ENCODE measurements at regions of chr22 and their contacts with region 1.

Region 1: GRCh38 chr22:20885557-20886323 is 26.9 kb downstream of the SNAP29 start:
- DNase-seq: peak; percentile 90
- H3K4me3 Mint-ChIP-seq: peak overlapping the region; percentile 32
- H3K27ac Mint-ChIP-seq: peak overlapping the region; percentile 58
- H3K4me1 Mint-ChIP-seq: peaks cover 28% of the 10 kb centered on the region
- H3K27me3 Mint-ChIP-seq: no peaks in the 10 kb centered on the region
- CTCF ChIP-seq: peak; percentile 98

Region 2: GRCh38 chr22:20803696-20804324 is 81.9 kb before region 1 on chr22:
- CTCF ChIA-PET with region 1: interaction called, 14 read pairs
- intact Hi-C with region 1: no loop called
- DNase-seq: peak; percentile 57
- H3K4me3 Mint-ChIP-seq: no peak overlapping the region
- H3K27ac Mint-ChIP-seq: no peak overlapping the region
- H3K4me1 Mint-ChIP-seq: peaks cover 13% of the 10 kb centered on the region
- H3K27me3 Mint-ChIP-seq: no peaks in the 10 kb centered on the region
- CTCF ChIP-seq: peak; percentile 60

Region 3: DNA sequence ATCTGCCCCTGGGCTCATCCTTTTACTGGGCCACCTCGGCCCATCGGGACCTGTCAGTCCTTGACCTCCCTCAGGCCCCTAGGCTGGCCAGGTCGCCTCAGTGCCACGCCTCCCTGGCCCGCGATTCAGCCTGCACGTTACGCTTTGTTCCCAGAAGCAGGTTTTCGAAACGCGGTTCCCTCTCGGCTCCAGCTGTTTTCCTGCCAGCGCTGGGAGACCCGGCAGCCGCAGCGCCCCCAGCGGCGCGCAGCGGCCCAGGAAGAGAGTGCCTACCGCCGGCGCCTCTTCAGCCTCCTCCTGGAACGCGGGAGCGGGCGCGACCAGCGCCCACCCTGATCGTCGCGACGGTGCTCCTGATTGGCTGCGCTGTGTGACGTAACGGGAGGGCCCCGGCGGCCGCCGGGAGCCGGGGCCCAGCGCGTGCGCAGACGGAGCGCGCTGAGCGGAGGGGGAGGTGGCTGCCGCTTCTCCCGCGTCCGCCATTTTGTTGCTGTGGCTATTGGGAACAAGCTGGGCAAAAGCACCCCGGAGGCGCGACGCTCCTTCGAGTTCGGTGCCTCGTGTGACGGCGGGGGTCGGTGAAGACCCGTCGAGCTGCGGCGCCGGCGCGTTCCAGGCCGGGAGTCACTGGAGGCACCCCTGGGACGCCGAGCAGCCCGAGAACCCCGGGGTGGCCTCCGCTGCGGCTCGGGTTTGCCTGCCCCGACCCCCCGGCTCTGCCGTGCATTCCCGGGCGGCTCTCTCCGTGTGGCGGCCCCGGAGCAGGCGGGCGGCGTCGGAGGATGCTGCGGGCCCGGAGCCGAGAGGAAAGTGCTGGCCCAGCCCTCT is 31.5 kb after region 1 on chr22 and contains the start of gene CRKL:
- CTCF ChIA-PET with region 1: interaction called, 16 read pairs
- intact Hi-C with region 1: no loop called
- DNase-seq: peak; percentile 97
- H3K4me3 Mint-ChIP-seq: peak within 1 kb of the TSS; percentile 76
- H3K27ac Mint-ChIP-seq: peak within 1 kb of the TSS; percentile 81
- H3K4me1 Mint-ChIP-seq: peaks cover 21% of the 10 kb centered on the region
- H3K27me3 Mint-ChIP-seq: no peaks in the 10 kb centered on the region
- CTCF ChIP-seq: peak; percentile 90
- total RNA-seq, gene CRKL: 68.0 and 69.9 TPM in 2 replicates

Region 4: DNA sequence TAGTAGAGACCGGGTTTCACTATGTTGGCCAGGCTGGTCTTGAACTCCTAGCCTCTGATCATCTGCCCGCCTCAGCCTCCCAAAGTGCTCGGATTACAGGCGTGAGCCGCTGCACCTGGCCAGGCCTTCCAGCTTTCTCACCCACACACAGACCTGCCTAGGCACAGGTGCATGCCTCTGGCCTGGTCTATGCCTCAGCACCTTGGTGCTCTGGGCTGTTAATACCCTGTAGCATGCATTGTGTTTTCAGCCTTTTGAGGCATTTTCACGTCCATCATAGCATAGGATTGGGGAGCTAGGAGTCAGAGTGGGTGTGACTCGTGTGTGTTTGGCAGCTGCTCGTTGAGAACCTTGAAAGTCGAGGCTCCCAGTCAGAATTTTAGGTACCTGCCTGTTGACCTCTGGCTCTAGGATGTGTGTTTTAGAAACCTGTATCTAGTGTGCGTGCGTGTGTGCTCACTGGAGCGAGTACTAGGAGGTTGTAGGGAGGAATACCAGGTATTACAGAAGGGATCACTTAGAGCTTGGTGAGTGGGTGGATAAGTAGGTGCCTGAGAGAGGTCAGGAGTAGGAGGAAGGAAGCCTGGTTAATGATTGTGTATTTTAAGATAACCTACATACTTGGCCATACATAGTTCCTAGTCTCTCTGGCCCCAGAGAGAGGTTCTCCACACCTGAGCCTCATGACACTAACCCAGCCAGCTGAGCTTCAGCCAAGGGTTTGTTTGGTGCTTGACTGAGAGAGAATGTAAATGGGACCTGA is 51.5 kb after region 1 on chr22:
- CTCF ChIA-PET with region 1: interaction called, 18 read pairs
- intact Hi-C with region 1: no loop called
- DNase-seq: no peak
- H3K4me3 Mint-ChIP-seq: peak overlapping the region; percentile 70
- H3K27ac Mint-ChIP-seq: peak overlapping the region; percentile 67
- H3K4me1 Mint-ChIP-seq: peaks cover 53% of the 10 kb centered on the region
- H3K27me3 Mint-ChIP-seq: no peaks in the 10 kb centered on the region
- CTCF ChIP-seq: no peak

Region 5: GRCh38 chr22:20957316-20958101 is 71.8 kb after region 1 on chr22:
- CTCF ChIA-PET with region 1: interaction called, 26 read pairs
- intact Hi-C with region 1: no loop called
- DNase-seq: peak; percentile 52
- H3K4me3 Mint-ChIP-seq: peak overlapping the region; percentile 91
- H3K27ac Mint-ChIP-seq: peak overlapping the region; percentile 82
- H3K4me1 Mint-ChIP-seq: peaks cover 28% of the 10 kb centered on the region
- H3K27me3 Mint-ChIP-seq: no peaks in the 10 kb centered on the region
- CTCF ChIP-seq: no peak

Region 6: DNA sequence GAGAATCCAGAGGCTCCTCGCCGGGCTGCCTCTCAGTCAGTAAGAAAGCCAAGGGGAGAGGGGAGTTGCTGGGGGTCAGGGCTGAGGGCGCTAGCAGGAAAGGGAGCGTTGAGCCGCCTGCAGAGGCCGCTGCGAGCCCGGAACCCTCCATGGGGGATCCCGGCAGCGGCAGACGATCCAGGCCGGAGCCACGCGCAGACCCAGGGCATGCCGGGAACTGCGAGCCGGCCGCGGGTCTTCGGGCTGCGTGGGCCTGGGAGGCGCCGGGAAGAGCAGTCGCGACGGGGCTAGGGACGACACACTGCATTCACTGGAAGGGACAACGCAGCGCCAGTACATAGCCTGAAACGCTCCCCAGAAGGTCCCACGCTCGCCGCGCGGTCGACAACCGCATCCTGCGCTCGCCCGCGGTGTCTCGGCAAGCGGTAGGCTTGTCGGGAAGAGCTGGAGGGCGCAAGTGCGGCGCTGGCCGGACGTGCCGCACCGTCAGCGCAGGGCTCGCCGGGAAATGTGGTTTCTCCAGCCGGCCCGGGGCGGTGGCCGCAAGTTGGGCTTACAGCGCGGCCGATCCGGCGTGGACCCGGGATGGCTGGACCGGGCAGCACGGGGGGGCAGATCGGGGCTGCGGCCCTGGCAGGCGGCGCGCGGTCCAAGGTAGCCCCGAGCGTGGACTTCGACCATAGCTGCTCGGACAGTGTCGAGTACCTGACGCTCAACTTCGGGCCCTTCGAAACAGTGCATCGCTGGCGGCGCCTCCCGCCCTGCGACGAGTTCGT is 96.2 kb after region 1 on chr22 and contains the start of gene LZTR1:
- CTCF ChIA-PET with region 1: interaction called, 16 read pairs
- intact Hi-C with region 1: no loop called
- DNase-seq: peak; percentile 80
- H3K4me3 Mint-ChIP-seq: peak within 1 kb of the TSS; percentile 97
- H3K27ac Mint-ChIP-seq: peak within 1 kb of the TSS; percentile 66
- H3K4me1 Mint-ChIP-seq: no peaks in the 10 kb centered on the region
- H3K27me3 Mint-ChIP-seq: peaks cover 11% of the 10 kb centered on the region
- CTCF ChIP-seq: peak; percentile 53
- total RNA-seq, gene LZTR1: 49.3 and 55.4 TPM in 2 replicates

Region 7: DNA sequence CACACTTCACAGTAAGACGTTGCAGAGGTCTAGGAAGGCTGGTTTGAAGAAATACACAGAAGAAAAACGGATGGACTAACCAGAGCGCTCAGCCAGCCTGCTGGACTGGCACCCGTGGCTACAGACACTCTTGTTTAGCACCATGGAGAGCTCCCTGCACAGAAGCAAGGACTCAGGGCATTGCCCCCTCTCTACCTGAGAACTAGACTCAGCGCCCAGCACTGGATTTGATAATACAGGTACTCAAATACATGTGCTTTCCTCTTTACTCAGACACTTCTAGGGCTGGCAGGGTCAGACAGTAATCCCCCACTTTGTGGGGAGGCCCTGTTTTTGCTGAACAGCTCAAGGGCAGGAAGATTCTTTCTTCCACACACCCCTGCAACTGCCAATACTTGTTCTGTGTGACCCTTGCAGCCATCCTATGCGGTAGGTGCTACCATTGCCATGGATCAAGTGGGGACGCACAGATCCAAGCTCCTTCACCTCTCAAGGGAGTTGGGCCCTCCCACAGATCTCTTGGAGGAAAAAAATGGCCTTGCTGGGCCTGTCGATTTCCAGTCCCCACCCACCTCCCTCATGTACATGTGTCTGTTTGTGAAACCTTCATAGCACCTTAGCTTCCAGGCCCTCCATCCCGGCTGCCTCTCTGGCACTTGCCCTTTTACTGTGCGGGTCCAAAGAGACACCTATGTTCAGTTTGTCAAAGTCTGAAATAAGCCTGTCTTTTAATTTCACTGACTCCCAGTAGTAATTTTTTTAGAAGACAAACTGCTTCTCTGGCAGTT is 124.1 kb after region 1 on chr22:
- CTCF ChIA-PET with region 1: no interaction called
- intact Hi-C with region 1: no loop called
- DNase-seq: peak; percentile 47
- H3K4me3 Mint-ChIP-seq: no peak overlapping the region
- H3K27ac Mint-ChIP-seq: no peak overlapping the region
- H3K4me1 Mint-ChIP-seq: peaks cover 12% of the 10 kb centered on the region
- H3K27me3 Mint-ChIP-seq: no peaks in the 10 kb centered on the region
- CTCF ChIP-seq: no peak

Region 8: DNA sequence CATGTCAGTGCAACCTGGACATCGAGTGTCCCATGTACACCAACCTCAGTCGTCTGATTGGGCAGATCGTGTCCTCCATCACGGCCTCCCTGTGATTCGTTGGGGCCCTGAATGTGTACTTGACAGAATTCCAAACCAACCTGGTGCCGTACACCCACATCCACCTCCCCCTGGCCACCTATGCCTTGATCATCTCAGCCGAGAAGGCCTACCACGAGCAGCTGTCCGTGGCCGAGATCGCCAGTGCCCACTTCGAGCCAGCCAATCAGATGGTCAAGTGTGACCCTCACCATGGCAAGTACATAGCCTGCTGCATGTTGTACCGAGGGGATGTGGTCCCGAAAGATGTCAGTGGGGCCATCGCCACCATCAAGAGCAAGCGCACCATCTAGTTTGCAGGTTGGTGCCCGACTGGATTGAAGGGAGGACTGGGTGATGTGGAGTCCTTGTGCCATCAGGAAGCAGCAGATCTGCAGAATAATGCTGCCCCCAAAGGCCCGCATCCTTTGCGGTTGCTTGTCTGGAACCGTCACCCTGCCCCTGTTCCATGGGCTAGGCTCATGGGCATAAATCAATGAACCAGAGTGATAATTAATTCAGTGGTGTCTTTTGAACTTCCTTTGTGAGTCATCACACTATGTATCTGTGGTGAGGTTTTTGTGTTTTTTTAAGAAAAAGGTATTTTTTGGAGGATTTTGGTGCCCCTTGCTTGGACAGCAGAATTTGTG is 182.1 kb after region 1 on chr22:
- CTCF ChIA-PET with region 1: no interaction called
- intact Hi-C with region 1: no loop called
- DNase-seq: no peak
- H3K4me3 Mint-ChIP-seq: no peak overlapping the region
- H3K27ac Mint-ChIP-seq: no peak overlapping the region
- H3K4me1 Mint-ChIP-seq: no peaks in the 10 kb centered on the region
- H3K27me3 Mint-ChIP-seq: peaks cover 50% of the 10 kb centered on the region
- CTCF ChIP-seq: no peak